Natural killer cell (primary cell): ENCODE measurements at regions of chr2 and their contacts with region 1.

Region 1: GRCh38 chr2:168136392-168136977 is 110.9 kb downstream of the STK39 start:
- DNase-seq: peak in 1 of 2 donors; percentile 63
- ATAC-seq: peak; percentile 39 to 70 (median 67)
- H3K4me3 ChIP-seq: no peak overlapping the region
- H3K4me3 Mint-ChIP-seq: no peak overlapping the region
- H3K27ac ChIP-seq: no peak overlapping the region
- H3K27ac Mint-ChIP-seq: peak overlapping the region; percentile 72 to 76
- H3K4me1 ChIP-seq: no peaks in the 10 kb centered on the region
- H3K4me1 Mint-ChIP-seq: peaks cover 33 to 53% of the 10 kb centered on the region in 2 donors
- H3K27me3 ChIP-seq: no peaks in the 10 kb centered on the region
- H3K27me3 Mint-ChIP-seq: no peaks in the 10 kb centered on the region
- CTCF ChIP-seq: peak; percentile 76

Region 2: DNA sequence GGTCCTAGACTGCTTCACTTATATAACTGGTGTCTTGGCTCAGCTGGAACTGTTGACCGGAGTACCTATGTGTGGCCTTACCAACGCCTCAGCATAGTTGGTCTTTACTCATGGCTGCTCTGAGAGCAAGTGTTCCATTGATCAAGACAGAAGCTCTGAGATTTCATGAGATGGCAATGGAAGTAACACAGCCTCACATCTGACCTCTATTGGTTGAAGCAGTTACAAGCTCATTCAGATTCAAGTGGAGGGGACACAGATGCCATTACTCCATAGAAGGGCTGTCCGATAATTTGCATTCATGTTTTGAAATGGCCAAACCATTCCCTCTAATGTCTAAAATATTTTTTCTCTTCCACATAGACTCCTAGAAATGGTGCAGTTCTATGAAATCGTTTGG is 157.3 kb after region 1 on chr2:
- intact Hi-C with region 1: loop called (anchors 2 kb)
- DNase-seq: peak in 1 of 2 donors; percentile 16
- ATAC-seq: peak in 2 of 3 donors; percentile 36 to 51
- H3K4me3 ChIP-seq: no peak overlapping the region
- H3K4me3 Mint-ChIP-seq: no peak overlapping the region
- H3K27ac ChIP-seq: no peak overlapping the region
- H3K27ac Mint-ChIP-seq: no peak overlapping the region
- H3K4me1 ChIP-seq: no peaks in the 10 kb centered on the region
- H3K4me1 Mint-ChIP-seq: no peaks in the 10 kb centered on the region
- H3K27me3 ChIP-seq: no peaks in the 10 kb centered on the region
- H3K27me3 Mint-ChIP-seq: no peaks in the 10 kb centered on the region
- CTCF ChIP-seq: peak; percentile 12

Region 3: DNA sequence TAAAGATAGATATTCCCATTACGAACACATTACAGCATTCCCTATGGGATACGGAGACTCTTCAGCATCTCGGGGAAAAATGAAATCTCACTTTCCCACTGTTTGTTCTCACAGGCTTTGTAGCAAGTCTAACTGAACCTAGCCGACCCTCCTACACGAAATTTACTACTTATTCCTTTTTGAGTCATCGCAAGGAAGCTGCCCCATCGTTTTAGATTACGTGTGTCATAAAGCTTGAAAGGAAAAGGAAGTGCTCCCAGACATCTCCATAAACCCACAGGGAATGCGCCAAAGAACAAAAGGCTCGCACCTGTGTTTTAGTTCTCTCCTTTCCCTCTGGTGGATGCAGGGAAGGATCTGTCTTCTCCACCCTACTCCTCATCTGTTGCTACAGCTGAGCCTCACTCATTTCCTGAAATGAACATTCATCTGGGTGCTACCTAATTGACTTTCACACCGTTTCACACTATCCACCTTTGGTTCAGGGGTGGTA is 187.1 kb after region 1 on chr2:
- intact Hi-C with region 1: no loop called
- DNase-seq: no peak
- ATAC-seq: no peak
- H3K4me3 ChIP-seq: no peak overlapping the region
- H3K4me3 Mint-ChIP-seq: no peak overlapping the region
- H3K27ac ChIP-seq: no peak overlapping the region
- H3K27ac Mint-ChIP-seq: no peak overlapping the region
- H3K4me1 ChIP-seq: no peaks in the 10 kb centered on the region
- H3K4me1 Mint-ChIP-seq: no peaks in the 10 kb centered on the region
- H3K27me3 ChIP-seq: no peaks in the 10 kb centered on the region
- H3K27me3 Mint-ChIP-seq: peaks cover 3 to 5% of the 10 kb centered on the region in 2 donors
- CTCF ChIP-seq: no peak

Region 4: GRCh38 chr2:168920504-168921157 is 784.1 kb after region 1 on chr2:
- intact Hi-C with region 1: loop called (anchors 5 kb)
- DNase-seq: peak in 1 of 2 donors; percentile 68
- ATAC-seq: peak in 1 of 3 donors; percentile 60
- H3K4me3 ChIP-seq: no peak overlapping the region
- H3K4me3 Mint-ChIP-seq: no peak overlapping the region
- H3K27ac ChIP-seq: no peak overlapping the region
- H3K27ac Mint-ChIP-seq: no peak overlapping the region
- H3K4me1 ChIP-seq: no peaks in the 10 kb centered on the region
- H3K4me1 Mint-ChIP-seq: peaks cover 0 to 6% of the 10 kb centered on the region in 2 donors
- H3K27me3 ChIP-seq: no peaks in the 10 kb centered on the region
- H3K27me3 Mint-ChIP-seq: peaks cover 23 to 47% of the 10 kb centered on the region in 2 donors
- CTCF ChIP-seq: peak; percentile 68